ENCODE measurements at regions of chr17 and their contacts with region 1.

Region 1: GRCh38 chr17:76506408-76507349 is 5.5 kb upstream of the RHBDF2 start:
- DNase-seq: peak; percentile 63 to 77
- ATAC-seq: peak; percentile 71 to 77
- H3K4me3 ChIP-seq: no peak overlapping the region
- H3K27ac ChIP-seq: peak overlapping the region in 3 of 4 donors; percentile 40 to 72 (median 68)
- H3K4me1 ChIP-seq: peaks cover 3 to 11% of the 10 kb centered on the region in 2 donors
- H3K27me3 ChIP-seq: no peaks in the 10 kb centered on the region
- CTCF ChIP-seq: peak; percentile 94 to 99 (median 96)
- POLR2A ChIP-seq: no peak

Region 2: DNA sequence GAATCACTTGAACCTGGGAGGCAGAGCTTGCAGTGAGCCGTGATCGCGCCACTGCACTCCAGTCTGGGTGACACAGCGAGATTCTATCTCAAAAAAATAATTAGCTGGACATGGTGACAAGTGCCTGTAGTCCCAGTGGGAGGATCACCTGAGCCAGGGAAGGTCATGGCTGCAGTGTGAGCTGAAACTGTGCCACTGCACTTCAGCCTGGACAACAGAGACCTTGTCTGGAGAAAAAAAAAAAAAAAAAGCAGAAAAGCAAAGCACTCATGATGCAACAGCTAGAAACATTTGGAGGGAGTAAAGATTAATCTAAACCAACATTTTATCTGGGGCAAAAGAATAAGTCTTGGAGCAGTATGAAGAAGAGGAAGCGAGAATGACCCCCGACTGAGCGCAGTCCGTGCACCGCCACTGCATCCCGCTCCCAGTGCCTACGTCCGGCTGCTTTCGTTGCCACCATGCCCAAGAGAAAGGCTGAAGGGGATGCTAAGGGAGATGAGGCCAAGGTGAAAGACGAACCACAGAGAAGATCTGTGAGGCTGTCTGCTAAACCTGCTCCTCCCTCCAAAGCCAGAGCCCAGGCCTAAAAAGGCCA is 161.2 kb before region 1 on chr17:
- in situ Hi-C with region 1: no loop called
- intact Hi-C with region 1: no loop called
- DNase-seq: no peak
- ATAC-seq: no peak
- H3K4me3 ChIP-seq: no peak overlapping the region
- H3K27ac ChIP-seq: no peak overlapping the region
- H3K4me1 ChIP-seq: no peaks in the 10 kb centered on the region
- H3K27me3 ChIP-seq: no peaks in the 10 kb centered on the region
- CTCF ChIP-seq: no peak
- POLR2A ChIP-seq: no peak

Region 3: DNA sequence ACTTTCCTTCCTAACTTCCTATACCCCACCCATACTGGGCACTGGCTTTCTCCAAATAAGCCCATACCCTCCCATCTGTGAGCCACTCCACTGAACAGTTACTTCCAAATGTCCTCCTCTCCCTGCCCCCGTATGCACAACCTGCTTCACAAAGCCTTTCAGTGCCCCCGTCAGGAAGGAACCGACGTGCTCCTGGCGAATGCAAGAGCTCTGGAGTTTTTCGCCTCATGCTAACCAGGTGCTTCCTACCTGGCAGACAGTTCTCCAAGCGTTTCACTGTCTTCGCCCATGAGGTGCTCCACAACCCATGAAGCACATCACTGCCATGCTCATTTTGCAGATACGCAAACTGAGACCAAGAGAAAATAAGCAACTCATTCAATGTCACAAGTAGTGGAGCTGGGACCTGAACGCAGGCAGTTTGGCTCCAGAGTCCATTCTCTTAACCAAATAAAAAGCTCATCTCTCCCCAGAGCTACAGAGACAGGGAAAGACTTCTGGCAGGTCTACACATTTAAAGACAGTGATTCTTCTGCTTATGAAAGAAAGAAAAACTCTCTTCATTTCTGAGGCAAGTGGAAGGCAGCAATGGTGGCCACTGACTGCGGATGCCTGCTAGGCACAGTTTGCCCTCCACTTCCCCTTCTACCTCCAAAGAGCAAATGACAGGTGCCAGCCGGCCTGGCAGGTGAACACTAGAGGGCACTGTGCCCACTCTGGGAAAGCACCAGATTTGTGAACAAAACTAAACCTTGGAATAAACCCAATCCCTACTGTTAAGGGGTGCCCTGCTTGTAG is 98.4 kb before region 1 on chr17:
- in situ Hi-C with region 1: no loop called
- intact Hi-C with region 1: loop called (anchors 1 kb)
- DNase-seq: peak in 1 of 2 donors; percentile 65
- ATAC-seq: peak in 1 of 2 donors; percentile 33
- H3K4me3 ChIP-seq: no peak overlapping the region
- H3K27ac ChIP-seq: no peak overlapping the region
- H3K4me1 ChIP-seq: peaks cover 35 to 47% of the 10 kb centered on the region in 2 donors
- H3K27me3 ChIP-seq: no peaks in the 10 kb centered on the region
- CTCF ChIP-seq: peak; percentile 65 to 77 (median 66)
- POLR2A ChIP-seq: no peak

Region 4: GRCh38 chr17:76467366-76467765 is 39.3 kb before region 1 on chr17 and contains the start of gene AANAT:
- in situ Hi-C with region 1: loop called (anchors 5 kb)
- intact Hi-C with region 1: loop called (anchors 1 kb)
- DNase-seq: no peak
- ATAC-seq: no peak
- H3K4me3 ChIP-seq: no peak within 1 kb of the TSS
- H3K27ac ChIP-seq: no peak within 1 kb of the TSS
- H3K4me1 ChIP-seq: peaks cover 0 to 3% of the 10 kb centered on the region in 2 donors
- H3K27me3 ChIP-seq: no peaks in the 10 kb centered on the region
- CTCF ChIP-seq: no peak
- POLR2A ChIP-seq: no peak
- total RNA-seq, gene AANAT: not detected

Measured in gastrocnemius medialis (tissue), 4 donors.